Ascending aorta (tissue), 2 donors: ENCODE measurements at regions of chr6 and their contacts with region 1.

Region 1: GRCh38 chr6:105402939-105403935 is at the start of gene PREP:
- DNase-seq: peak; percentile 12 to 88
- H3K4me3 ChIP-seq: peak within 1 kb of the TSS; percentile 71 to 82
- H3K27ac ChIP-seq: peak within 1 kb of the TSS; percentile 80 to 84
- H3K4me1 ChIP-seq: peaks cover 0 to 16% of the 10 kb centered on the region in 2 donors
- H3K27me3 ChIP-seq: no peaks in the 10 kb centered on the region
- CTCF ChIP-seq: peak; percentile 45 to 85 (median 78)
- total RNA-seq, gene PREP: 5.1 TPM

Region 2: DNA sequence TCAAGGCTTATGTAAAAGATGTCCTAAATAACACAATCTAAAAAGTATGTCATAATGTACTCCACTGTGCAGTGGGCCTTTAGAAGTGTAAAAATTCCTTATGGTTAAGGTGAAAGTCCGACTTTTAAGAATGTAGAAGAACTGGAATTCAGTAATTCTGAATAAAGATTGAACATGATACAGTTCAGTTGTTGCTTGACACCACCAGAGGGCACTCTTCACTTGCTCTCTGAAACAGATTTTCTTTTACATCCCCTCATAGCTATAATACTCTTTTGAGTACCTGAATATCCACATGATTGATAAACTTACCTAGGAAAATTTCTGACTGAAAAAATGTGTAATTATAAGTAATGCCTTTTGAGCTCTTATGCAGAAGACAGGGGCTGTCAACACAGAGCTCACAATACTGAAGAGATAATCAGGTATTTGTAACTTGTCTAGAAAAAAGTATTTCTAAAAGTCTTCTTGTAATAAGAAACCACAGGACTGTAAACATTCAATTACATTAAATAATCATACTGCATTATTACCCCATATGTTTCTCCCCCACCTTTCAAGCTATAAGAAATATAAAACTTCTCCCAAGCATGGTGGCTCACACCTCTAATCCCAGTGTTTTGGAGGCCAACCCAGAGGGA is 315.5 kb before region 1 on chr6:
- intact Hi-C with region 1: loop called (anchors 2 kb)
- DNase-seq: no peak
- H3K4me3 ChIP-seq: no peak overlapping the region
- H3K27ac ChIP-seq: no peak overlapping the region
- H3K4me1 ChIP-seq: peaks cover 0 to 5% of the 10 kb centered on the region in 2 donors
- H3K27me3 ChIP-seq: no peaks in the 10 kb centered on the region
- CTCF ChIP-seq: peak; percentile 47 to 83 (median 68)

Region 3: GRCh38 chr6:105136431-105137350 is 266.5 kb before region 1 on chr6:
- intact Hi-C with region 1: loop called (anchors 5 kb)
- DNase-seq: peak in 1 of 2 donors; percentile 69
- H3K4me3 ChIP-seq: peak overlapping the region; percentile 82 to 93
- H3K27ac ChIP-seq: peak overlapping the region; percentile 83 to 90
- H3K4me1 ChIP-seq: peaks cover 0 to 7% of the 10 kb centered on the region in 2 donors
- H3K27me3 ChIP-seq: no peaks in the 10 kb centered on the region
- CTCF ChIP-seq: peak; percentile 6 to 30 (median 11)

Region 4: DNA sequence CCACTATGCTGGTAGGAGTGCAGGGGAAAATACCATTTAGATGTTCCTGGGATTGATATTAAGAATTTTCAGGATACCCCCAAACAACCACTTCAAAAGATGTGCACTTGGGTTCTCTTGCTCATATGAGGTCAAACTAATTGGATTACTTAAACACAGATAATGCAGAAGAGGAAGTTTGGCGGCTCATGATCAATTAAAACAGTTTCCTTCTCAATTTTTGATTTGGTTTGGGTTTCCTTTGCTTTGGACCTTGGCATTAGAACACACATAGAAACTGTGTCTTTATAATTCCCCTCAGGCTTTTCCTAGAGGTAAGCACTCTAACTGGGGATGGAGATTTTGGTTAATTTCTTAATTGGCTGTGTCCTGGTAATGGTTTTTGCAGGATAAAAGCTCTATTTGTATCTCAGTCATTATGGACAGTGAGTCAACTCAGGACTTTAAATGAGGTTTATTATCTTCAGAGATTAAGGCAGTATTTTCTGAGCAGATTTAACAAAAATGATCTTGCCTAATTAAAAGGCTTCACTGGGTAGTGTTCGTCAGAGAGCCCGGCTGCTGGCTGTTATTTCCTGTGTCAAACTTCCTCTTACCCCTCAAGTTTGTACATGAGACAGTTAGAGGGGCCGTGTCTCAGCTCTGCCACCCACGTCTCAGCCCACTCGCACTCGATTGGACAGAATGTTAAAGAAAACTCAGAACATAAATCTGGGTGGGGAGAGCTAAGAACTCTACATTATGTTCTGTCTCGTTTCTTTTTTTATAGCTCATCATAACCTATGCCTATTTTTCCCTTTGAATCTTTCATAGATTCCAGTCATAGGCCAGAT is 49.9 kb after region 1 on chr6:
- intact Hi-C with region 1: no loop called
- DNase-seq: peak in 1 of 2 donors; percentile 72
- H3K4me3 ChIP-seq: no peak overlapping the region
- H3K27ac ChIP-seq: no peak overlapping the region
- H3K4me1 ChIP-seq: no peaks in the 10 kb centered on the region
- H3K27me3 ChIP-seq: no peaks in the 10 kb centered on the region
- CTCF ChIP-seq: no peak

Region 5: GRCh38 chr6:105601541-105602236 is 198.5 kb after region 1 on chr6:
- intact Hi-C with region 1: loop called (anchors 10 kb)
- DNase-seq: peak; percentile 46 to 94
- H3K4me3 ChIP-seq: peak overlapping the region; percentile 28 to 44
- H3K27ac ChIP-seq: peak overlapping the region; percentile 62 to 87
- H3K4me1 ChIP-seq: peaks cover 0 to 30% of the 10 kb centered on the region in 2 donors
- H3K27me3 ChIP-seq: no peaks in the 10 kb centered on the region
- CTCF ChIP-seq: no peak